ENCODE measurements at regions of chr16 and their contacts with region 1.

Region 1: GRCh38 chr16:53892155-53892554 is 188.2 kb downstream of the FTO start:
- DNase-seq: peak; percentile 75
- H3K4me3 Mint-ChIP-seq: no peak overlapping the region
- H3K27ac Mint-ChIP-seq: no peak overlapping the region
- H3K4me1 Mint-ChIP-seq: peaks cover 9% of the 10 kb centered on the region
- H3K27me3 Mint-ChIP-seq: no peaks in the 10 kb centered on the region

Region 2: DNA sequence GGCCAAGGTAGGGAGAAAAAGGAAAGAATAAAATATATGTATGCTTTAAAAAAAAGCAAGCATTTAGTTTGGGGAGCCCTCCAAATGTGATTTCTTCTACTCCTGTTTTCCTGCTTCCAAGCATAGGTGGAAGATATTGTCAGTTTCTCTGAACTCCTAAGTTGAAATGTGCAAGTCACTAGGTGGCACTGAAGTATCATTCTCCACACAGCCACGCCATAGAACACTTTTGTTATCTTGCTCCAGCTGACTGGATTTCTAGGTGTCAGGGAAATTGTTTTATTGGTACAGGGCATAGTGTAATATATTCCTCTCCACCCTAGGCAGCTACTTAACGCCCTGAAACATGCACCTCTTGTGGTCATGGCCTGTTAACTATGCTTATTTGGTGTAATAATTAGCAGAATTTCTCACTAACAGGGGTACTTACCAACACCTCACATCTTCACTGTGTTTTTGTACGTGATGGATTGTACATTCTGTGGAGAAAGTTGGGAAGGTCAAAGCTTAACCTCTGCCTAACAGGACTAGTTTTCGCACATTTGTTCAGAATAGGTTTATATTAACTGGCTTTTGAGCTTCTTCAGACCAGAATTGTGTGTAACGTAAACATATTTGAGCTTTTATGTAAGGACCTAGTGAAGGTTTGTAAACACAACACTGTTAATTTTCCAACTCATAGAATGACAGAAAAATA is 118.9 kb before region 1 on chr16:
- CTCF ChIA-PET with region 1: no interaction called
- intact Hi-C with region 1: loop called (anchors 2 kb)
- DNase-seq: peak; percentile 40
- H3K4me3 Mint-ChIP-seq: no peak overlapping the region
- H3K27ac Mint-ChIP-seq: no peak overlapping the region
- H3K4me1 Mint-ChIP-seq: peaks cover 31% of the 10 kb centered on the region
- H3K27me3 Mint-ChIP-seq: no peaks in the 10 kb centered on the region

Region 3: GRCh38 chr16:53848277-53848942 is 43.7 kb before region 1 on chr16:
- CTCF ChIA-PET with region 1: no interaction called
- intact Hi-C with region 1: no loop called
- DNase-seq: no peak
- H3K4me3 Mint-ChIP-seq: no peak overlapping the region
- H3K27ac Mint-ChIP-seq: no peak overlapping the region
- H3K4me1 Mint-ChIP-seq: peaks cover 10% of the 10 kb centered on the region
- H3K27me3 Mint-ChIP-seq: no peaks in the 10 kb centered on the region

Region 4: DNA sequence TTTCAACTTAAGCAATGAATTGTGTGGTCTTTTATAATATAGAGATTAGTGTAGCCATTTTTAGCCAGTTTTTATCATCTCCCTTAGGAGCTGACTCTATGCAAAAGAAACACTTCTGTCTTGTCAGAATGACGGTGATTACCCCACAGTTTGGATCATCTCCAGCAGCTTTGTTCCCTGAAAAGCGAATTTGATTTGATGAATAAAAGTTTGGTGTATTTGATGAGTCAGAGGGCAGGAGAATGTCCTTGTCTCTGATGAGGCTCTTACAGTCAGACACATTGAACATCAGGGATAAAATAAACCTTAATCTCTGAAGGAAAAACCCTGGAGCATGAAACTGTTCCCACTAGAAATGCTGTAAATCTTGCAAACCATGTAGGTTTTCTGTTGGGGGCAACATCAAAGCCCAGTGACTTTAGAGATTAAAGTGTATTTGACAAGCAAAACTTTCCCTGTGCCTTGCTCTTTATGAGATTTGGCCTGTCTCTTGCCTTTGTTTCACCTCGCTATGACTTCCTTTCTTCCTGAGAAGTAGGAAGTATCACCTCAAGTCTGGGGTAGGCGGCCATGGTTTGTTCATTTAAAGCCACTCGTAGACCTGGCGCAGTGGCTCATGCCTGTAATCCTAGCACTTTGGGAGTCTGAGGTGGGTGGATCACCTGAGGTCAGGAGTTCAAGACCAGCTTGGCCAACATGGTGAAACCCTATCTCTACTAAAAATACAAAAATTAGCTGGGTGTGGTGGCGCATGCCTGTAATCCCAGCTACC is 21.1 kb after region 1 on chr16:
- CTCF ChIA-PET with region 1: no interaction called
- intact Hi-C with region 1: no loop called
- DNase-seq: peak; percentile 42
- H3K4me3 Mint-ChIP-seq: peak overlapping the region; percentile 23
- H3K27ac Mint-ChIP-seq: peak overlapping the region; percentile 79
- H3K4me1 Mint-ChIP-seq: peaks cover 8% of the 10 kb centered on the region
- H3K27me3 Mint-ChIP-seq: no peaks in the 10 kb centered on the region

Region 5: DNA sequence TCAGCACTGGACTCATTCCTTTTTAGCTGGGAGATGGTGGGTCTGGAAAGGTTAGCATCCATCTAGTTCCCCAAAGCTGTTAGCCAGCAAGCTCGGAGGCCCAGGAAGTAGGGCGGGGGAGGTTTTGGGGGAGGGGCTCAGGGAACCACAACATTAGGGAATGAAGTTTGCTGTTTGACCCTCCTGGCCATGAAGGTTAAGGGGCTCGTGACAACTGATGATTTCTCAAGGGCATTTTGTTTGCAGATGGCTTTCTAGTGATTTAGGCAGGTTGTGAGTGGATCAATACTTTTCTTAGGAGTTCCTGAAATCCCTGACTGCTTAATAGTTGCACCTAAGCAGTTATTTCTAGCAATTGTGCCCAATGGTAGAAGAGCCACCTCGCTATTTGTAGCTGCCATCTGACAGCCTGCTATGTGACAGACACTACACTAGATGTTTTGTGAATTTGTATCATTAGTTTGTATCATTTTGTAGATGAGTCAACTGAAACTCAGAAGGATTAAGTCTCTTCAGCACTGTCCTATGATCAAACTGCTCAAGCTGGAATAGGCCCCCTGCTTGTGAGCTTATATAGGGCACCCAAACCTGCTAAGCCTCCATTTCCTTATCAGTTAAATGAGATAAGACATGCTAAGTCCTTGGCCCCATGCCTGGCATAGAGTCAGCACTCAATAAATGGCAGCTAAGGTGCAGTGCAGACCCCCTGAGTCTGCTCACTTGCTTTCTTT is 248.1 kb after region 1 on chr16:
- CTCF ChIA-PET with region 1: no interaction called
- intact Hi-C with region 1: loop called (anchors 10 kb)
- DNase-seq: no peak
- H3K4me3 Mint-ChIP-seq: no peak overlapping the region
- H3K27ac Mint-ChIP-seq: no peak overlapping the region
- H3K4me1 Mint-ChIP-seq: no peaks in the 10 kb centered on the region
- H3K27me3 Mint-ChIP-seq: peaks cover 16% of the 10 kb centered on the region

Region 6: GRCh38 chr16:54286090-54286993 is 394.2 kb after region 1 on chr16 and contains the start of gene IRX3:
- CTCF ChIA-PET with region 1: interaction called, 3 read pairs
- intact Hi-C with region 1: loop called (anchors 2 kb)
- DNase-seq: peak; percentile 19
- H3K4me3 Mint-ChIP-seq: peak within 1 kb of the TSS; percentile 48
- H3K27ac Mint-ChIP-seq: no peak within 1 kb of the TSS
- H3K4me1 Mint-ChIP-seq: peaks cover 41% of the 10 kb centered on the region
- H3K27me3 Mint-ChIP-seq: peaks cover 69% of the 10 kb centered on the region
- total RNA-seq, gene IRX3: not detected

Measured in activated naive CD4-positive, alpha-beta T cell treated with anti-CD3 and anti-CD28 coated beads for 36 hours (primary cell).